ENCODE measurements at regions of chr17 and their contacts with region 1.

Region 1: GRCh38 chr17:77494664-77495435 is 354.1 kb downstream of the SEC14L1 start:
- DNase-seq: peak; percentile 93
- H3K4me3 ChIP-seq: no peak overlapping the region
- H3K27ac ChIP-seq: peak overlapping the region; percentile 69 to 87 (median 78)
- H3K4me1 ChIP-seq: peaks cover 0 to 24% (median 23%) of the 10 kb centered on the region in 4 donors
- H3K27me3 ChIP-seq: no peaks in the 10 kb centered on the region
- CTCF ChIP-seq: peak; percentile 97 to 100 (median 100)
- EP300 ChIP-seq: no peak
- POLR2A ChIP-seq: no peak

Region 2: DNA sequence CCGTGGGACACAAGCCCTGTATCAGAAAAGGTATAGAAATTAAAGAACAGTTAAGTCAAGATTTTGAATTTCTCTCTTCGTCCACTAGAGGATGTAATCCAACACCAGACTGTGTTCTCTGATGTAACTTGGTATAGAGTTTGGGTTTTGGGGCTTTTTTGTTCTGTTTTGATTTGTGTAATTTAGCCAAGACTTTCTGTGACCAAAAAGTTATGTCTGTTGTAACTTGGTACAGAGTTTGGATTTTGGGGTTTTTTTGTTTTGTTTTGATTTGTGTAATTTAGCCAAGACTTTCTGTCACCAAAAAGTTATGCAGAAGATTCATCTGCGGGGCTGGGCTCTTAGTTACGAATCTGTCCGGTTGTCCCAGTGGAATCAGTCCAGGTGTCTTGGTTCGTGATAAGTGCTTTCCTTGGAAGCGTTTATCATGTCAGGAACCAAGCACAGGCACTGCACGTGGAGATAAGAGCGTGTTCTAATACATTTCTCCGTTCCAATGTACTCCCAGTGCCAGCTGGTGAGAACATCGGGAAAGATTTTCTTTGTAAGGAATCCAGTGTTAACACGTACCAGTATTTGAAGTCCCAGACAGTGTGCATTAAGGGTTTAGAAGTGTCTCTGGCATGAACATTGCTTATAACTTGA is 398.2 kb before region 1 on chr17:
- intact Hi-C with region 1: loop called (anchors 10 kb)
- DNase-seq: no peak
- H3K4me3 ChIP-seq: peak overlapping the region in 1 of 4 donors; percentile 4
- H3K27ac ChIP-seq: peak overlapping the region; percentile 76 to 80 (median 78)
- H3K4me1 ChIP-seq: peaks cover 0 to 41% (median 37%) of the 10 kb centered on the region in 4 donors
- H3K27me3 ChIP-seq: no peaks in the 10 kb centered on the region
- CTCF ChIP-seq: peak; percentile 67 to 95 (median 78)
- EP300 ChIP-seq: no peak
- POLR2A ChIP-seq: no peak

Region 3: GRCh38 chr17:77331301-77331864 is 163.5 kb before region 1 on chr17:
- intact Hi-C with region 1: loop called (anchors 1 kb)
- DNase-seq: peak; percentile 96
- H3K4me3 ChIP-seq: peak overlapping the region in 3 of 4 donors; percentile 34 to 38 (median 35)
- H3K27ac ChIP-seq: peak overlapping the region; percentile 73 to 92 (median 80)
- H3K4me1 ChIP-seq: peaks cover 0 to 43% (median 28%) of the 10 kb centered on the region in 4 donors
- H3K27me3 ChIP-seq: no peaks in the 10 kb centered on the region
- CTCF ChIP-seq: peak; percentile 91 to 97 (median 94)
- EP300 ChIP-seq: no peak
- POLR2A ChIP-seq: no peak

Region 4: DNA sequence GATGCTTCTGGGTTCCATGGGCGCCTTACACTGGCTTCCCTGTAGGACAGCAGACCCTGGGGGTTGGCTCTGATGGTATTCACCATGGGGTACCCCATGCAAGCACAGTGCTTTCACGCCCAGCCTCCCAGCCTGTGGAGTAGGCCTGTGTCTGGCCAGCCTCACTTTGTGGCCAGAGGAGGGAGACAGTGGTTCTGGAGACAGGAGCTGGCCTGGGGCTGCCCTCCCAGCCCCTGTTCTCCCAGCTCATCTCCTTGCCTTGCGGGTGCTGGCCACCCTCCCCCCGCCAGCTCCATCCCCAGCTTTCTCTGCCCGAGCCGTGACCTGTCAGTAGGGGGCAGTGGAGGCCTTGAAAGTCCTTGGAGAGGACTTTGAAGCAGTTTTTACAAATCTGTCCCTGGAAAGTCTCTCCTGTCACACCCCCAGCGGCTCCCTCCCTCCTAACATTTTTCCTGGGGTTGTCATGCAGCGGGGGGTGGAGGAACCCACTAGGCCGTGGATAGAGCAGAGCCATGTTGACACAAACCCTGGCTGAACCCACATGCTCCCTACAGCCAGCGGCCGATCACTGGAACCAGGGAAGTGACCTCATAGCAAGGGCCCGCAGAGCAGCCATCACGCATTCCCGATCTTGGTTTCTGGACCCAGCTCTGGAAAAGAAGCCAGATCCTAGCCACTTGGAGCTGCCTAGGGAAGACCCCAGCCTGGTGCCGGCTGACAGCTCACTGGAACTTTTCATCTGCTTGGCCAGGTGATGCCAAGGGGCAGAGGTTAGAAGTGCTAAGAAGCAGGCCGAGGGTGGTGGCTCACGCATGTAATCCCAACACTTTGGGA is 64.7 kb before region 1 on chr17:
- intact Hi-C with region 1: loop called (anchors 1 kb)
- DNase-seq: peak; percentile 99
- H3K4me3 ChIP-seq: no peak overlapping the region
- H3K27ac ChIP-seq: peak overlapping the region; percentile 96 to 100 (median 98)
- H3K4me1 ChIP-seq: peaks cover 0 to 100% (median 99%) of the 10 kb centered on the region in 4 donors
- H3K27me3 ChIP-seq: no peaks in the 10 kb centered on the region
- CTCF ChIP-seq: peak in 3 of 4 experiments; percentile 78 to 95 (median 81)
- EP300 ChIP-seq: peak in 3 of 4 donors; percentile 87 to 96 (median 90)
- POLR2A ChIP-seq: no peak